HCT116 (cell line): ENCODE measurements at regions of chr15 and their contacts with region 1.

Region 1: DNA sequence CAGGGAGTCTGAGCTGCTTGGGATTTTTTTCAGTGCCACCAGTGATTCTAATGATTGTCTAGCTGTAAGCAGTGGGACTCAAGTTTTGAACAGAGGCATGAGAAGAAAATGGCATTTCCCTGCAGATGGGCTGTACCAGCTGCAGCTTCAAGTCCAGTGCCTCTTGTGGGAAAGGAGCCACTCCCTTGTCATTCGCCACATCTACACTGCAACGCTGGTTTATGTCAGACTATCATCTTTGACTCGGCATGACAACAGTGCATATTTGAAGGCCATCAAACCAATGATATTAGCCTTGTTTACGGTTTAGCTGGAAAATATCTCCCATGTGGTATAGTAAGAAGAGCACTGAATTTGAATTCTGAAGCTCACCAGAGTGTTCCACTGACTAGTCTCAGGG is 22.2 kb downstream of the SCG5 start:
- DNase-seq: no peak
- ATAC-seq: no peak
- H3K4me3 ChIP-seq: no peak overlapping the region
- H3K27ac ChIP-seq: no peak overlapping the region
- H3K4me1 ChIP-seq: no peaks in the 10 kb centered on the region
- H3K27me3 ChIP-seq: no peaks in the 10 kb centered on the region
- CTCF ChIP-seq: no peak
- POLR2A ChIP-seq: no peak
- RAD21 ChIP-seq: no peak

Region 2: GRCh38 chr15:32936283-32936918 is 272.7 kb after region 1 on chr15:
- CTCF ChIA-PET with region 1: interaction called, 19 read pairs
- POLR2A ChIA-PET with region 1: interaction called, 3 read pairs
- RAD21 ChIA-PET with region 1: no interaction called
- intact Hi-C with region 1: no loop called
- DNase-seq: peak; percentile 33
- ATAC-seq: peak; percentile 84
- H3K4me3 ChIP-seq: no peak overlapping the region
- H3K27ac ChIP-seq: no peak overlapping the region
- H3K4me1 ChIP-seq: no peaks in the 10 kb centered on the region
- H3K27me3 ChIP-seq: no peaks in the 10 kb centered on the region
- CTCF ChIP-seq: peak; percentile 40 to 72 (median 68); a peak in 5 of 6 replicates
- POLR2A ChIP-seq: no peak
- RAD21 ChIP-seq: peak; percentile 43